ENCODE measurements at regions of chr17 and their contacts with region 1.

Region 1: GRCh38 chr17:61474235-61474937 is 22.2 kb downstream of the TBX4 start:
- DNase-seq: peak; percentile 80
- H3K4me3 ChIP-seq: no peak overlapping the region
- H3K27me3 ChIP-seq: no peaks in the 10 kb centered on the region
- CTCF ChIP-seq: no peak

Region 2: DNA sequence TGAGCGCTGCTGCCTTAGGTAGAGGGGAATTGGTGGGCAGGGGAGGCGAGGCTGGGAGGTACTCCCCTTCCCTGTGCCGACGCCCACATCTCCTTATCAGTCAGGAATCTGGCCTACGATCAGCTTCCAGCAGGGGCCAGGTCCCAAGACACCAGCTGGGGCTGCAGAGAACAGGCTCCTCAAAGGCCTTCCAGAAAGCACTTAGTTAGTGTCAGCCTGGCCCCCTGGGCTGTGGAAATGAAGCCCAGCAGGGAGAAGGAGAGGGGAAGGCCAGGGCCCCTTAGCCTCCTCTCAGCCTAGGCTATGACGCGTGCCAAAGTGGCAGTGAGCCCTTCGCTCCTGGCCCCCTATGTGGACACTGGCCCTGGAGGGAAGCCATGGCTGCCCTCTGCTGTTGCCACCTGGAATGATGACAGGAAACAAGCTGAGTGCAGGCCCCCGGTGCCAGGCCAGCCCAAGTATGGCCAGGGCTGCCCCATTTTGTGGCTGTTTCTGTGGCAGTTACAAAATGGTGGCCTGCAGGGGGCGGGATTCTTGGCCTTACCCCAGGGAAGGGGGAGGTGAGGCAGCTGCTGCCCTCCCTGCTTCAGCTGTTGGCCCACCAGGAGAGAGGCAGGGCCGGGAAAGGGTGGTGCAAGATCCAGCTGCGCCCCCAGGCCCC is 10.9 kb before region 1 on chr17:
- CTCF ChIA-PET with region 1: interaction called, 17 read pairs
- POLR2A ChIA-PET with region 1: interaction called, 5 read pairs
- DNase-seq: no peak
- H3K4me3 ChIP-seq: no peak overlapping the region
- H3K27me3 ChIP-seq: peaks cover 11% of the 10 kb centered on the region
- CTCF ChIP-seq: peak; percentile 30; the same call in 1 of the 2 replicates

Region 3: DNA sequence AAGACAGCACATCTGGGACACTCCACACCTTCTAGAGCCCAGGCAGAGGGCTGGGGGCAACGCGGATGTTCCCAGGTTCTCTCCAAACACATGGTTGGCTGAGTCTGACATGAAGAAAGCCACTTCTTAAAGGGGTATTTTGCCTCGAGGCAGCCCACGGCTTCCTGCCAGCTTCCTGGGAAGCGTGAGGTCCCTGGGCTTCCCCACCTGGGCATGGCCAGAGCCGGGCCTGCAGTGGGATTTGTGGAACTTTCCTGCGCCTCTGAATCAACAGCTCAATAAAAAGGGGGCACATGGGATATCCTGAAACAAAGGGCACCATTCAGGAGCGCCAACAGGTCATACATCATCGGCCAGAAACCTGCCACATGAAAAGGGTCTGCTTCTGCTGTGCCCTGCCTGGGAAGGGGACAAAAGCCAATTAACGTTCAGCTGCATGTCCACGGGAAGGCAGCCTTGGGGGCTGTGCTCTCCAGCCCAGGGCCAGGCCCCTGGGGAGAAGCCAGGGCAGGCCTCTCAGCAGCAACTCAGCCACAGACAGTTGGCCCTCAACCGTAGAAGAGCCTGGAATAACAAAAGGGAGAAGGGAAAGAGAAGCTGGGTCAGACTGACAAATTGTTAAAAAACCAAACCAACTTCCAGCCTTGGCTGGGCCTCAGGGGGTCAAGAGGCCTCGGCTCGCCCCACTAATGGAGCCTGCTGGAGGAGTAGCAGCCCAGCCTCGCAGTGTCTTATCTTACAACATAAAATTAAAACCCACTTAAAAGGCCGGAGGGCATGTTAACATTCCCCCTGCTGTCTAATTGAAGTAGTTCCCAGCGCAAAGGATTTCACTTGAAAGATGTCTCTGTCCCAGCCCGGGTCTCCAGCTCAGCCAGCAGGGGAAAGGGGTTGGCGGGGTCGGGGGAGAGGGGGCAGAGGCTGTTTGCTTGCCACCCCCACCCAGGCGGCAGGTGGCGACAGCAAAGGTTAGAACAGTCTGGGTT is 12.0 kb after region 1 on chr17:
- CTCF ChIA-PET with region 1: interaction called, 10 read pairs
- POLR2A ChIA-PET with region 1: no interaction called
- DNase-seq: no peak
- H3K4me3 ChIP-seq: no peak overlapping the region
- H3K27me3 ChIP-seq: no peaks in the 10 kb centered on the region
- CTCF ChIP-seq: peak; percentile 21; the same call in 1 of the 2 replicates